K562 (cell line): ENCODE measurements at regions of chr3 and their contacts with region 1.

Region 1: GRCh38 chr3:100463002-100463401 is 29.4 kb upstream of the TMEM45A start:
- DNase-seq: peak; percentile 31 to 66 (median 39)
- ATAC-seq: peak; percentile 97
- H3K4me3 ChIP-seq: no peak overlapping the region
- H3K27ac ChIP-seq: no peak overlapping the region
- H3K4me1 ChIP-seq: peaks cover 0 to 4% of the 10 kb centered on the region in 2 experiments; a peak in 1 of 5 replicates
- H3K27me3 ChIP-seq: no peaks in the 10 kb centered on the region
- CTCF ChIP-seq: peak; percentile 66 to 82 (median 67)
- EP300 ChIP-seq: no peak
- POLR2A ChIP-seq: no peak
- RAD21 ChIP-seq: peak; percentile 87 to 95

Region 2: GRCh38 chr3:100068826-100069225 is 394.2 kb before region 1 on chr3:
- CTCF ChIA-PET with region 1: no interaction called
- POLR2A ChIA-PET with region 1: no interaction called
- in situ Hi-C with region 1: no loop called
- intact Hi-C with region 1: no loop called
- DNase-seq: peak; percentile 32 to 79 (median 52)
- ATAC-seq: peak; percentile 96
- H3K4me3 ChIP-seq: no peak overlapping the region
- H3K27ac ChIP-seq: no peak overlapping the region
- H3K4me1 ChIP-seq: peaks cover 2 to 8% of the 10 kb centered on the region in 2 experiments; a peak in 3 of 5 replicates
- H3K27me3 ChIP-seq: no peaks in the 10 kb centered on the region
- CTCF ChIP-seq: peak; percentile 69 to 78 (median 70)
- EP300 ChIP-seq: no peak
- POLR2A ChIP-seq: no peak
- RAD21 ChIP-seq: peak; percentile 75 to 84

Region 3: DNA sequence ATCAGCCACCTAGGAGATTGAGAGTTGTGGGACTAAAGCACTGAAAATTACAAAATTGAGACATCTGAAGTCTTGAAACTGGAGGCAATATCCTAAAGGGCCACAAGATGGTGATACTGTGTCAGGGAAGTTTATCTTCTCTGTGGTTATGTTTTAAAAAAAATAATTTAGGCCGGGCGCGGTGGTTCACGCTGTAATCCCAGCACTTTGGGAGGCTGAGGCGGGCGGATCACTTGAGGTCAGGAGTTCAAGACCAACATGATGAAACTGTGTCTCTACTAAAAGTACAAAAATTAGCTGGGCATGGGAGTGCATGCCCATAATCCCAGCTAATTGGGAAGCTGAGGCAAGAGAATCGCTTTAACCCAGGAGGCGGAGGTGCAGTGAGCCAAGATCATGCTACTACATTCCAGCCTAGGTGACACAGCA is 146.3 kb before region 1 on chr3:
- CTCF ChIA-PET with region 1: no interaction called
- POLR2A ChIA-PET with region 1: no interaction called
- in situ Hi-C with region 1: no loop called
- intact Hi-C with region 1: loop called (anchors 5 kb)
- DNase-seq: peak; percentile 13 to 68 (median 22)
- ATAC-seq: peak; percentile 92
- H3K4me3 ChIP-seq: no peak overlapping the region
- H3K27ac ChIP-seq: no peak overlapping the region
- H3K4me1 ChIP-seq: no peaks in the 10 kb centered on the region; a peak in 1 of 5 replicates
- H3K27me3 ChIP-seq: no peaks in the 10 kb centered on the region
- CTCF ChIP-seq: peak; percentile 32 to 64 (median 60); a peak in 5 of 6 replicates
- EP300 ChIP-seq: no peak
- POLR2A ChIP-seq: no peak
- RAD21 ChIP-seq: peak; percentile 61 to 66

Region 4: DNA sequence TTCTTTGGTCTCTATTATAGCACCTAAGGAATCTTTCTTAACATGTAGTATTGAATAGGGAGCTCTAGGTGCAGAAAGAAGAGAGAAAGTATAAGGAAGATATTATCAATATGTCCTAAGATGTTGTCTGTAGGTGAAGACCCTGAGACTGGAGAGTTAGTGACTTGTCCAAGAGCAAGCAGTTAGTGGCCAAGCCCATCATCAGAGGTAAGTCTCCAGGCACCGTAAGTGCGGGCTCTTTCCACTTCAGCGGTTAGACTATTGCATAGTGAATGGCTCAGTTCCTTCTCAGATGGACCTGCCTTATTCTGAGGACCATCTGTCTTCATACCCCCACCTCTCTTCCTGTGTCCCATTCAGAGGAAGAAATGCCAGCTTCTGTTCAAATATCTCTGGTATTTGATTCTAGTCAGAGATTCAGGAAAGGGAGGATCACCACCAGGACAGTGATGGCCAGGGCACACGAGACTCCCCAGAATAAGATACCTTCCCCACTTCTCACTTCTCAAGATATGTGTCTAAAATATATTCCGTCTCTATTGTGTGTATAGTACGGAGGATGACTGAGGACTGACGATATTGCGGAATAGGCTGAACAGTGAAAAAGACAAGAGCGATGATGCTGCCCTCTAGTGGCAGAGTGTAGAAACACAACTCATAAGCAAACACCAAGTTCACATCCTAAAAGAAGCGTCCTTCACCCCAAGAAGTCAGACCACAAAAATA is 127.3 kb after region 1 on chr3:
- CTCF ChIA-PET with region 1: interaction called, 7 read pairs
- POLR2A ChIA-PET with region 1: no interaction called
- in situ Hi-C with region 1: loop called (anchors 5 kb)
- intact Hi-C with region 1: loop called (anchors 1 kb)
- DNase-seq: peak; percentile 51 to 73 (median 57)
- ATAC-seq: peak; percentile 88
- H3K4me3 ChIP-seq: no peak overlapping the region
- H3K27ac ChIP-seq: no peak overlapping the region
- H3K4me1 ChIP-seq: no peaks in the 10 kb centered on the region; a peak in 1 of 5 replicates
- H3K27me3 ChIP-seq: no peaks in the 10 kb centered on the region
- CTCF ChIP-seq: peak; percentile 55 to 80 (median 68)
- EP300 ChIP-seq: no peak
- POLR2A ChIP-seq: no peak
- RAD21 ChIP-seq: peak; percentile 85 to 90

Region 5: DNA sequence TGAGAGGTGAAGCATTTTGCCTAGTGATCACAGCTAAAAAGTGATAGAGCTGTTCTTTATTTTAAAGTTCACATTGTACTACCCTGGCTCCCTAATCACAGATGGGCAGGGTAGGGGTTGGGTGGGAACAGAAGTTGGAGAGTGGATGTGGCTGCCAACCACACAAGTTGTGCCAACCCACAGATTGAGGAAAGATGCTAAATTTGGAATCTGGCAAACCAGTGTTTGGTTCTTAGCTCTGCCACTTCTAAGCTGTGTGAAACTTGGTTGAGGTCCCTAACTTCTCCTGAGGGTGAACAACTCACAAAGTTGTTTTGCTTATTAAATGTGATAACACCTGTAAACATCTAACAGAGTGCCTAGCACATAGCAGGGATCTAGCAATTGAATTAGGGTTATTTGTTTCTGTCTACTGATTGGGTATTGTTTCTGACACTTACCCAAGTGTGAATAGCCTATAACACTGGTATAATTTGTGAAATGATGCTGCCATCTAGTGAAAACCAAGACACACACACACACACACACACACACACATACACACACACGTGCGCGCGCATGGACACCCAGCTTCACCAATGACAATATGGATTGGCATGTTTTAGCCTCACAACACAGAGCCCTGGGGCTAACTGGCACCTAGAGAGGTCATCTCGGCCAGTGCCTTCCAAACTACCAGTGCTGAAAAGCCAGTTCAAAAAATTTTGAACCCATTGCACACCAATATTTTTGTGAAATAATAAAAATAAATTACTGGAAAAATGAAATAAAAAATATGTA is 171.7 kb after region 1 on chr3:
- CTCF ChIA-PET with region 1: no interaction called
- POLR2A ChIA-PET with region 1: no interaction called
- in situ Hi-C with region 1: no loop called
- intact Hi-C with region 1: loop called (anchors 2 kb)
- DNase-seq: peak in 2 of 4 experiments; percentile 37 to 60
- ATAC-seq: peak; percentile 91
- H3K4me3 ChIP-seq: no peak overlapping the region
- H3K27ac ChIP-seq: no peak overlapping the region; the same call in 2 of the 3 replicates
- H3K4me1 ChIP-seq: peaks cover 0 to 20% of the 10 kb centered on the region in 2 experiments; a peak in 2 of 5 replicates
- H3K27me3 ChIP-seq: no peaks in the 10 kb centered on the region
- CTCF ChIP-seq: peak; percentile 33 to 57 (median 36); a peak in 4 of 6 replicates
- EP300 ChIP-seq: no peak
- POLR2A ChIP-seq: no peak
- RAD21 ChIP-seq: peak; percentile 58 to 80

Region 6: DNA sequence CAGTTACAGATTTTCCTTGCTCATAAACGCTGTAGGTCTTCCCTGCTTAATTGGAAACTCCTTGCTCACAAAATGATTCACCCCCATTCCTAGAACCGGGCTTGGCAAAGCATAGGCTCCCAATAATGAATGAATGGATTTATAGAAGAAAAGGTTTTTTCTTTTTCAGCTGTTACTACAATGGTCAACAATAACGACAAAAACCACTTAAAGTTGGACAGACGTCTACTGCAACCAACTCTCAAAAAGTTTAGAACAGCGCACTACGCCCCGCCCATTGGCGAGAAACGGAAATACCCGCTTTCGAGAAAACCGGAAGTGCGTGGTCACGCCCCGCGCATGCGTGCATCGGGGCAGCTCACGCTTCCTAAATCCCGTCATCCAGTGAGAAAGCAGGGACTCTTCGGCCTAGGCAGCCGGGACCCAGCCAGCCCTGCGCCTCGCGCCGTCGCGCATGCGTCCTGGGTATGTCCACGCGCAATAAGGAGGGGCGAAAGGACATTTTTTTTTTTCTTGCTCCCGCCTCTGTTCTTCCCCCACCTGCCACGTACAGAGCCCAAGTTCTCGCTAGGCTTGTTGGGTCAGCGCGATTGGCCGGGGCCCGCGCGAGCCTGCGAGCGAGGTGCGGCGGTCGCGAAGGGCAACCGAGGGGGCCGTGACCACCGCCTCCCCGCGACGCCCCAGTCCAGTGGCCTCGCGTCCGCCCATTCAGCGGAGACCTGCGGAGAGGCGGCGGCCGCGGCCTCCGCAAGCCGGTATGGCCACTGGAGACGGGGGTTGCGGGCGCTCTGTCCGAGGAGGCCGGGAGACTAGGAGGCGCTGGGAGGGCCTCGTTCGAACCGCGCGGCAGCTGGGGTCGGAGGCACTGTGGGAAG is 246.2 kb after region 1 on chr3 and contains the start of gene TFG:
- CTCF ChIA-PET with region 1: interaction called, 5 read pairs
- POLR2A ChIA-PET with region 1: no interaction called
- in situ Hi-C with region 1: no loop called
- intact Hi-C with region 1: loop called (anchors 10 kb)
- DNase-seq: peak; percentile 97 to 98 (median 98)
- ATAC-seq: peak; percentile 94
- H3K4me3 ChIP-seq: peak within 1 kb of the TSS; percentile 83
- H3K27ac ChIP-seq: peak within 1 kb of the TSS; percentile 92
- H3K4me1 ChIP-seq: peaks cover 4 to 19% of the 10 kb centered on the region in 2 experiments; a peak in 3 of 5 replicates
- H3K27me3 ChIP-seq: no peaks in the 10 kb centered on the region
- CTCF ChIP-seq: no peak
- EP300 ChIP-seq: 0 out of 2 replicates have a peak, but pooled peaks have one; percentile 7
- POLR2A ChIP-seq: peak; percentile 76
- RAD21 ChIP-seq: no peak
- polyA plus RNA-seq, gene TFG: 33.5 to 48.8 TPM

Region 7: DNA sequence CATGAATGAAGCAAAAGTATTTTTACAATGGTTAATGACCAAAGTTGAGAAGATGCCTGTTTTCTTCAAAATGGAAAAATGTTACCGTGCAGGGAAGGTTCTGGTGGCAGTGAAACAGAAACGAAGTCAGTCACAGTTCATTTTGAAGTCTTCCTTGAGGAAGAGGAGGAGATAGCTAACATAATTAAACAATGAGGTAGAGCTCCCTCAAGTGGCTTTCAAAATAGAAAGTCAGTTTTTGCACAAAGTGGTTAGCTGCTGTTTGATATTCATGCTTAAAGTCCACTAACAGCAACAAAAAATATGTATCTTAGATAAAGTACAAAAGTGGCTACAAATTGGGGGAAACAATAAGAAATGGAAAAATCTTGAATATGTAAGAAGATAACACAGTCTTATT is 333.6 kb after region 1 on chr3:
- CTCF ChIA-PET with region 1: interaction called, 5 read pairs
- POLR2A ChIA-PET with region 1: no interaction called
- in situ Hi-C with region 1: no loop called
- intact Hi-C with region 1: loop called (anchors 5 kb)
- DNase-seq: peak in 1 of 4 experiments; percentile 11
- ATAC-seq: peak; percentile 61; the same call in 2 of the 3 replicates
- H3K4me3 ChIP-seq: no peak overlapping the region
- H3K27ac ChIP-seq: no peak overlapping the region
- H3K4me1 ChIP-seq: no peaks in the 10 kb centered on the region
- H3K27me3 ChIP-seq: no peaks in the 10 kb centered on the region
- CTCF ChIP-seq: peak in 2 of 3 experiments; percentile 42 to 50; a peak in 3 of 6 replicates
- EP300 ChIP-seq: no peak
- POLR2A ChIP-seq: no peak
- RAD21 ChIP-seq: peak; percentile 17 to 66; a peak in 2 of 4 replicates